Esophagus muscularis mucosa (tissue), 4 donors: ENCODE measurements at regions of chr9 and their contacts with region 1.

Region 1: GRCh38 chr9:21806644-21807043 is 4.2 kb downstream of the MTAP start:
- DNase-seq: no peak
- H3K4me3 ChIP-seq: no peak overlapping the region
- H3K27ac ChIP-seq: no peak overlapping the region
- H3K4me1 ChIP-seq: peaks cover 39 to 76% (median 63%) of the 10 kb centered on the region in 4 donors
- H3K27me3 ChIP-seq: no peaks in the 10 kb centered on the region
- CTCF ChIP-seq: no peak
- EP300 ChIP-seq: no peak
- POLR2A ChIP-seq: no peak

Region 2: DNA sequence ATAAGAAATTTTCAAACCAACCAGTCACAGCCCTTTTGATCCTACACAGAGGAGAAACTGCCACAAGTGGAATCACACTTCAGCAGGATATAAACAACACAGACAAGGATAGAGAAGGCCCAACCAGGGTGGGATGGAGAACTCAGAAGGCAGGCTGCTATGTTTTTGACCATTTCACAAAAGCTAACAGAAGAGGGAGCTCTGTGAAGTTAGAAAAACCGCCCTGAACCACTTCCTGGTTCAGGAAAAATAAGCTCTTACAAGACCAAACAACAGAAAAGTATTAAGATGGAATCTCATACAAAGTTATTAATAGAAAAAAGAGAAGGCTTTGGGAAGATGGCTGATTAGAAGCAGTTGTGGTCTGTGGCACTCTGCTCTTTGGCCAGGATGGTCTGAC is 727.9 kb before region 1 on chr9:
- intact Hi-C with region 1: no loop called
- DNase-seq: no peak
- H3K4me3 ChIP-seq: no peak overlapping the region
- H3K27ac ChIP-seq: no peak overlapping the region
- H3K4me1 ChIP-seq: peaks cover 0 to 14% (median 0%) of the 10 kb centered on the region in 4 donors
- H3K27me3 ChIP-seq: no peaks in the 10 kb centered on the region
- CTCF ChIP-seq: no peak
- EP300 ChIP-seq: no peak
- POLR2A ChIP-seq: no peak

Region 3: DNA sequence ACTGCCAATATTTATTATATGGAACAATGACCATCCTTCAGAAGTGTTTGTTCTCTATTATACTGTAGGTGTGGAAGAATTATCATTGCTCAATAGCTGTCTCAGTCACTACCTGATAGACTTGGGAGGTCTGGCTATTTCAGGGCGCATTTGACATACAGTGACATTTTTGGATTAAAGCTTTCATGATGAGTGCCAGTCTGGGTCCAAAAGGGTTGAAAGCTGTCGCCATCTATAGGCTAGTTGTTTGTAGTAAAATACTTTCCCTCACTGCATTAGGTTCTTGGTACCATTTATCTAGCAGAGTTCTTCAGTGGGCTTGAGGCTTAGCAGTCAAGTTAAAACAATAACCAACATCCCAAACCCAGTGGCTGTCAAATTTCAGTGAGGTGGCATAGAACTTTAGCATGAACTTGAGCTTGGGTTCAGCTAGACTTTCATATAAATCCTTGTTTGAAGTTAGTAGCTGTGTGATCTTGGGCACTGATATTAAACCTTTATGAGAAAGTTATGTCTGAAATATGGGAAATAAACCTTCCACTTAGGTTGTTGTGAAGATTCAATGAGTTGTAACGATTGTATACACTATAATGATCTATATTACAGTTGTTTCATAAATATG is 313.0 kb after region 1 on chr9:
- intact Hi-C with region 1: loop called (anchors 5 kb)
- DNase-seq: no peak
- H3K4me3 ChIP-seq: no peak overlapping the region
- H3K27ac ChIP-seq: no peak overlapping the region
- H3K4me1 ChIP-seq: peaks cover 0 to 6% (median 2%) of the 10 kb centered on the region in 4 donors
- H3K27me3 ChIP-seq: no peaks in the 10 kb centered on the region
- CTCF ChIP-seq: peak in 1 of 3 experiments; percentile 40
- EP300 ChIP-seq: no peak
- POLR2A ChIP-seq: no peak

Region 4: GRCh38 chr9:22332202-22332601 is 525.6 kb after region 1 on chr9:
- intact Hi-C with region 1: no loop called
- DNase-seq: no peak
- H3K4me3 ChIP-seq: no peak overlapping the region
- H3K27ac ChIP-seq: no peak overlapping the region
- H3K4me1 ChIP-seq: no peaks in the 10 kb centered on the region
- H3K27me3 ChIP-seq: no peaks in the 10 kb centered on the region
- CTCF ChIP-seq: no peak
- EP300 ChIP-seq: no peak
- POLR2A ChIP-seq: no peak